ENCODE measurements at regions of chr12 and their contacts with region 1.

Region 1: DNA sequence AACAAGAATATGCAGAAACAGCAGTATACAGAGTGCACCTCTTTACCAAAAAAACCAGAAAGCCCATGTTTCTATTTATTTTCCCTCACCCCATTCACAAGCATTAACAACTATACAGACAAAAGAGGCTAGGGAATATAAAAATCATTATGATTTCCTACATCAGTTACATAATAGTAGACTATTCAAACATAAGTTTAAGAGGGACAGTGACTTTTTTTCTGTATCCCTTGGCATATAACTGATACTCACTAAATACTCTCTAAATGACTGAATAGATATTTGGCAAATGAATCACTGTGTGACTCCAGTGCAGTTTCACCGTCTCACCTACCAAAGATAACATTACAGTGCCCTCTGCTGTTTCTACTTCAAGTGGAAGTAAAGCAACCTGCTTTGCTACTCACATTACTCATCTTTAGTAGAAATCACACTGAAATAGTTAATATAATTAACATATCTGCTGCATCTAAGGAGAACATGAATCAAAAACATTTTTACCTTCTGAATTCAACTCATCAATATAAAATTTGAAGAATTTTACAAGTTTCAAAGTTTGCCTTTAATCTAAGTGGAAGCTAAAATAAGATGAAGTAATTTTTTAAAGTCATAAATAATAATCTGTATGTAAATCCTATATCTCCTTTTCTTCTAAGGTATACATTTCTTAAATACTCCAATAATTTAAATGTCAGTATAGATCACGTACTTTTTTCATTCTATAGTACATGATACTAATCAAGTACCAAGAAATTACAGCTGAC is 103.8 kb downstream of the OSBPL8 start:
- DNase-seq: peak in 4 of 5 donors; percentile 44 to 56 (median 51)
- H3K4me3 ChIP-seq: no peak overlapping the region
- H3K4me3 Mint-ChIP-seq: no peak overlapping the region
- H3K27ac ChIP-seq: no peak overlapping the region
- H3K27ac Mint-ChIP-seq: peak overlapping the region in 5 of 7 donors; percentile 30 to 88 (median 75)
- H3K4me1 ChIP-seq: peaks cover 42% of the 10 kb centered on the region
- H3K4me1 Mint-ChIP-seq: peaks cover 26 to 55% (median 33%) of the 10 kb centered on the region in 4 donors
- H3K27me3 ChIP-seq: no peaks in the 10 kb centered on the region
- H3K27me3 Mint-ChIP-seq: no peaks in the 10 kb centered on the region

Region 2: GRCh38 chr12:75334384-75335030 is 1121.3 kb before region 1 on chr12 and contains the start of gene GLIPR1L1:
- CTCF ChIA-PET with region 1: no interaction called
- POLR2A ChIA-PET with region 1: no interaction called
- intact Hi-C with region 1: loop called (anchors 1 kb)
- DNase-seq: peak; percentile 76 to 82 (median 77)
- H3K4me3 ChIP-seq: peak within 1 kb of the TSS in 1 of 2 donors; percentile 54
- H3K4me3 Mint-ChIP-seq: peak within 1 kb of the TSS; percentile 70 to 86 (median 80)
- H3K27ac ChIP-seq: no peak within 1 kb of the TSS
- H3K27ac Mint-ChIP-seq: peak within 1 kb of the TSS in 1 of 7 donors; percentile 54
- H3K4me1 ChIP-seq: peaks cover 21% of the 10 kb centered on the region
- H3K4me1 Mint-ChIP-seq: peaks cover 13 to 21% (median 17%) of the 10 kb centered on the region in 4 donors
- H3K27me3 ChIP-seq: peaks cover 6% of the 10 kb centered on the region
- H3K27me3 Mint-ChIP-seq: peaks cover 6 to 12% of the 10 kb centered on the region in 2 donors
- total RNA-seq, gene GLIPR1L1: not detected

Region 3: GRCh38 chr12:76037130-76038103 is 418.3 kb before region 1 on chr12:
- CTCF ChIA-PET with region 1: interaction called, 4 read pairs
- POLR2A ChIA-PET with region 1: interaction called, 3 read pairs
- intact Hi-C with region 1: loop called (anchors 5 kb)
- DNase-seq: peak; percentile 60 to 66 (median 64)
- H3K4me3 ChIP-seq: no peak overlapping the region
- H3K4me3 Mint-ChIP-seq: no peak overlapping the region
- H3K27ac ChIP-seq: no peak overlapping the region
- H3K27ac Mint-ChIP-seq: peak overlapping the region in 5 of 7 donors; percentile 0 to 68 (median 6)
- H3K4me1 ChIP-seq: peaks cover 5% of the 10 kb centered on the region
- H3K4me1 Mint-ChIP-seq: peaks cover 10 to 17% (median 13%) of the 10 kb centered on the region in 4 donors
- H3K27me3 ChIP-seq: no peaks in the 10 kb centered on the region
- H3K27me3 Mint-ChIP-seq: no peaks in the 10 kb centered on the region

Region 4: DNA sequence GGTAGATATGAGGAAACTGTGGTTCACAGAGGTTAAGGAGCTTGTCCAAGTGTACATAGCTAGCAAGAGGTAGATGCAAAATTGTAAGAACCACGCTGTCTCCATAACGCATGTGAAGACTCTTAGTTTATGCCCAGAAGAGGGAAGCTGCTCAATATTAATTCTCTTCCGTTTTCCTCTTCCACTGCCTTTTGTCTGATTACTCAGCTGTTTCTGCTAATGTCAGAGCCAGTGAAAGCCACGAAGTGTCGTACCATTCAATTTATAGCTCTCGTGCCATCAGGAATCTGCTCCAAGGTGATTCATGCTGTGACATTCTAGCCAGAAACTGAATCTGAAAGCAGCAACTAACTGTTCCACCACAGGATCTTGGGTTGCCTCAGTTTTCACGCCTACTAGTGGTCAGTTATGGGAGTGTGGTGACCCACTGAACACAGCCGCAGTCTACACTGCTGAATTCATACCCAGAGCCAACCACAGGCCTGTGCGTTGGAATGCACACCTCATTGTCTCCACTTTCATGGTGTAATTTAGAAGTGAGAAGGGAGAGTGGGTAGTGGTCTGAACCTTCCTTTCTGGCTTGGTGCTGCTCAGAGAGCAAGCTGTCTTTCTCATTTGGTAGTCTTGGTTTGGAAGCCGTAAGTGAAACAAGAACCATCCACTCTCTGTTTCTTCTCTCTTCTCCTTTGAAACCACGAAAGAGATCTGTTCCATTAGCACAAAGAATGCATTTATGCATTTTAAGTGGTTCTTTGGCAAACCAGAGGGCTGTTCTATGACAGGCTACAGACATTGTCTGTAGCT is 297.0 kb before region 1 on chr12:
- CTCF ChIA-PET with region 1: interaction called, 7 read pairs
- POLR2A ChIA-PET with region 1: no interaction called
- intact Hi-C with region 1: loop called (anchors 2 kb)
- DNase-seq: peak; percentile 46 to 57 (median 51)
- H3K4me3 ChIP-seq: peak overlapping the region in 1 of 2 donors; percentile 20
- H3K4me3 Mint-ChIP-seq: peak overlapping the region; percentile 68 to 77 (median 75)
- H3K27ac ChIP-seq: no peak overlapping the region
- H3K27ac Mint-ChIP-seq: peak overlapping the region in 6 of 7 donors; percentile 2 to 83 (median 70)
- H3K4me1 ChIP-seq: no peaks in the 10 kb centered on the region
- H3K4me1 Mint-ChIP-seq: peaks cover 8 to 11% (median 10%) of the 10 kb centered on the region in 4 donors
- H3K27me3 ChIP-seq: no peaks in the 10 kb centered on the region
- H3K27me3 Mint-ChIP-seq: no peaks in the 10 kb centered on the region

Region 5: GRCh38 chr12:76398106-76398505 is 57.7 kb before region 1 on chr12:
- CTCF ChIA-PET with region 1: no interaction called
- POLR2A ChIA-PET with region 1: no interaction called
- intact Hi-C with region 1: loop called (anchors 5 kb)
- DNase-seq: no peak
- H3K4me3 ChIP-seq: no peak overlapping the region
- H3K4me3 Mint-ChIP-seq: no peak overlapping the region
- H3K27ac ChIP-seq: no peak overlapping the region
- H3K27ac Mint-ChIP-seq: peak overlapping the region in 1 of 7 donors; percentile 13
- H3K4me1 ChIP-seq: no peaks in the 10 kb centered on the region
- H3K4me1 Mint-ChIP-seq: no peaks in the 10 kb centered on the region
- H3K27me3 ChIP-seq: no peaks in the 10 kb centered on the region
- H3K27me3 Mint-ChIP-seq: no peaks in the 10 kb centered on the region

Region 6: DNA sequence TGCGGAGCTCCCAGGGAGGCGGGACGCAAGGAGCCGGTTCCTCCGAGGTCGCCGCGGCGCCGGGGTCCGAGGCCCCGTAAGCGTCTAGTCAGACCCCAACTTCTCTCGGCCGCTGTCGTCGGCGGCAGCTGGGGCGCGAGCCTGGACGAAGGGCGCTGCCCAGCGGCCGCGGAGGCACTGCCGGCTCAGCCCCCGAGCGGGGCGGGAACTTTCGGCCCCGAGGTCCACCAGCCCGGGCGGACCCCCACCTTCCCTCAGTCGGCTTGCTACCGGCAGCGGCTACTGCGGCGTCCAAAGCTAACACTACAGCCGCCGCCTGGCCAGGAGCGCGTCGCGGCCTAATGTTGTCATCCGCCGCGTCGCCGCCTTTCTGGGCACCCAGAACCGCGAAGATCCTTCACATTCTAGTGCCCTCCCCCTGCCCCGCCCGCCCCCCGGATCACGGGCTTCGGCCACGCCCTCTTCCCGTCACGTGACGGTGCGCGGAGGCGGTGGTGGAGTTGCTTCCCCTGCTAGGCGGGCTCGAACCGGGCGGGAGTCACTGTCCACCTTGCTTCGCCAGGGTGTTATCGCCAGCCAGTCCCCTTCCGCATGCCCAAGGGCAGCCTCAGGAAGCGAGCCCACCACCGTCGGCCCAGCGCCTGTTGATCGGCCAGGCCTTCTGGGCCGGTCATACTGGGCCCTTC is 103.8 kb after region 1 on chr12 and contains the start of gene OSBPL8:
- CTCF ChIA-PET with region 1: interaction called, 6 read pairs
- POLR2A ChIA-PET with region 1: interaction called, 44 read pairs
- intact Hi-C with region 1: loop called (anchors 1 kb)
- DNase-seq: peak; percentile 89 to 94 (median 90)
- H3K4me3 ChIP-seq: peak within 1 kb of the TSS; percentile 95
- H3K4me3 Mint-ChIP-seq: peak within 1 kb of the TSS; percentile 96 to 97 (median 96)
- H3K27ac ChIP-seq: peak within 1 kb of the TSS; percentile 89
- H3K27ac Mint-ChIP-seq: peak within 1 kb of the TSS; percentile 94 to 99 (median 98)
- H3K4me1 ChIP-seq: peaks cover 46% of the 10 kb centered on the region
- H3K4me1 Mint-ChIP-seq: peaks cover 24 to 52% (median 31%) of the 10 kb centered on the region in 4 donors
- H3K27me3 ChIP-seq: no peaks in the 10 kb centered on the region
- H3K27me3 Mint-ChIP-seq: no peaks in the 10 kb centered on the region
- total RNA-seq, gene OSBPL8: 126 to 127 TPM